Mammary epithelial cell (primary cell): ENCODE measurements at regions of chr19 and their contacts with region 1.

Region 1: DNA sequence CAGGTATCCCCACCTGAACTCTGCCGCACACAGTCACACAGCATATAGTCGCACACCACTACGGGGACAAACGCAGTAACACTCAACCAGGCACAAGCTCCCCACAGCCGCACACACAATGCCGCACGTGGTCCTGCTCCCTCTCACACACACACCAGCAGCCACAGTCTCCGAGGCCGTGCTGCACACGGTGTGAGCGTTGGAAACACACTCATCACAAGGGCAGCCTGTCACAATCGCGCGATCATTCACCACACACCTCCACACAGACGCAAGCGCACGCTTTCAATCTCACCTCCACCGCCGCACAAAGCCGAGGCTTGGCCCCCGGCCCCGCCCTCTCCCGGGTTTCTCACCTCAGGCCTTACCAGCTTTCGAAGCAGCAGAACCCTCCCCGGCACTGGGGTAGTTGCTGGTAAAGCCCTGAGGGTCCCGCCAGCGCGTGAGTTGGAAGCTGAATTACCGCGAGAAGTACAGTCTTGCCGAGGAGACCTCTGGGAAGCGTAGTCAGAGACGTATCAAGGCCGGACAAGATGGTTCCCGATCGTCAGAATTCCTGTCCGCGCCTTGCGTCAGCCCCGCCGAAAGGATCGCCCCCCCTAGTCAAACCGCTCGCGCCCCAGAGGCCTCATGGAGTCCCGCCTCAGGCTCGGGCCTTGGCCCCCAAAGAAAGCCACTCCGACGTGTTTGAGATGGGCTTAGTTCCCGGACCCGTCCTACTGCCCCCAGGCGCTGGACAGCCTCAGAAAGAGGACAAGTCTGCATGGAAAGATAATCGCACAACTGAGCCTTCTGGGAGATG is at the start of gene ZNF566:
- DNase-seq: peak; percentile 96
- H3K4me3 ChIP-seq: peak within 1 kb of the TSS; percentile 61 to 72 (median 68)
- H3K27ac ChIP-seq: peak within 1 kb of the TSS; percentile 87
- H3K4me1 ChIP-seq: no peaks in the 10 kb centered on the region
- H3K27me3 ChIP-seq: no peaks in the 10 kb centered on the region
- CTCF ChIP-seq: no peak
- total RNA-seq, gene ZNF566: 6.0 to 7.2 TPM

Region 2: GRCh38 chr19:36132489-36132891 is 356.8 kb before region 1 on chr19:
- CTCF ChIA-PET with region 1: no interaction called
- dilution Hi-C with region 1: no loop called
- in situ Hi-C with region 1: loop called in 1 of 2 experiments (anchors 10 kb)
- intact Hi-C with region 1: loop called (anchors 5 kb)
- DNase-seq: peak; percentile 99
- H3K4me3 ChIP-seq: no peak overlapping the region
- H3K27ac ChIP-seq: peak overlapping the region; percentile 12
- H3K4me1 ChIP-seq: peaks cover 31% of the 10 kb centered on the region
- H3K27me3 ChIP-seq: no peaks in the 10 kb centered on the region
- CTCF ChIP-seq: no peak

Region 3: GRCh38 chr19:36196249-36196648 is 293.1 kb before region 1 on chr19:
- CTCF ChIA-PET with region 1: no interaction called
- dilution Hi-C with region 1: no loop called
- in situ Hi-C with region 1: no loop called
- intact Hi-C with region 1: loop called (anchors 2 kb)
- DNase-seq: no peak
- H3K4me3 ChIP-seq: no peak overlapping the region
- H3K27ac ChIP-seq: no peak overlapping the region
- H3K4me1 ChIP-seq: no peaks in the 10 kb centered on the region
- H3K27me3 ChIP-seq: no peaks in the 10 kb centered on the region
- CTCF ChIP-seq: no peak

Region 4: DNA sequence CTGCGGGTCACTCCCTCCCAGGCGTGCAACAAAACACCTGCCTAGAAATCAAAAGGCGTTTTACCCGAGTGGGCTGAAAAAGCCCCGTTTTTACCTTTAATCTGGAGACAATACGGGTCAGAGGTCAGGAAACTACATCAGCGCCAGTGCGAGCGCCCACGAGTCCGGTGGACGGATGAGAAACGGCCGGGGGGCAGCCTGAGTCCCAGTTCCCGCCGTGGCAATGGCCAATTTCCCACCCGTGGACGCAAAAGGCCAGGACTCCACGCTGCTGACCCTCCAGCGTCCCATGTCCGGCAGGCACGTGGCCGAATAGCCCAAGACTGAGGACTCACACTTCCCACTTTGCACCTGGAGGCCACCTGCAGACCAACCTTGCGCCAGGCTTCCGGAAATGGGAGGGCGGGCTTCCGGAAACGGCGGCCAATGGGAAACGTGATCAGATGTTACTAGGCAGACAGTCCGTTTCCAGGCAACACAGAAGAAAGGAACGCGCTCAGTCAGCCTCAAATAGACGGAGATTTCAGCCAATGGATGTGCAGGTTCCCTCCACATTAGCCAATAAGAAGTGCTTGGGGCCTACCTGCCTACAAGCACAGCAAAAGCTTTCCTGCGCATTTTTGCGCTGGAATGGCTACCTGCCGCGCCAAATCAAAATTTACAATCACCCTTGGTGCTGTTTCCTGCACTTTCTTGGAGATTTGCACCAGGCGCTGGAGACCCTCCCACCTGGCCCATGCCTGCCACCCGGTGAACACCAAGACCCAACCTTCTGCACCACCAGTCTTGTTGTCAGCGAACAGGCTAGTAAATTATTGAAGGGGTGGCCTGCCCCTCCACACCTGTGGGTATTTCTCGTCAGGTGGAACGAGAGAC is 157.7 kb before region 1 on chr19:
- CTCF ChIA-PET with region 1: no interaction called
- dilution Hi-C with region 1: no loop called
- in situ Hi-C with region 1: no loop called
- intact Hi-C with region 1: loop called (anchors 5 kb)
- DNase-seq: peak; percentile 91
- H3K4me3 ChIP-seq: peak overlapping the region; percentile 57 to 68 (median 63)
- H3K27ac ChIP-seq: no peak overlapping the region
- H3K4me1 ChIP-seq: no peaks in the 10 kb centered on the region
- H3K27me3 ChIP-seq: no peaks in the 10 kb centered on the region
- CTCF ChIP-seq: no peak

Region 5: DNA sequence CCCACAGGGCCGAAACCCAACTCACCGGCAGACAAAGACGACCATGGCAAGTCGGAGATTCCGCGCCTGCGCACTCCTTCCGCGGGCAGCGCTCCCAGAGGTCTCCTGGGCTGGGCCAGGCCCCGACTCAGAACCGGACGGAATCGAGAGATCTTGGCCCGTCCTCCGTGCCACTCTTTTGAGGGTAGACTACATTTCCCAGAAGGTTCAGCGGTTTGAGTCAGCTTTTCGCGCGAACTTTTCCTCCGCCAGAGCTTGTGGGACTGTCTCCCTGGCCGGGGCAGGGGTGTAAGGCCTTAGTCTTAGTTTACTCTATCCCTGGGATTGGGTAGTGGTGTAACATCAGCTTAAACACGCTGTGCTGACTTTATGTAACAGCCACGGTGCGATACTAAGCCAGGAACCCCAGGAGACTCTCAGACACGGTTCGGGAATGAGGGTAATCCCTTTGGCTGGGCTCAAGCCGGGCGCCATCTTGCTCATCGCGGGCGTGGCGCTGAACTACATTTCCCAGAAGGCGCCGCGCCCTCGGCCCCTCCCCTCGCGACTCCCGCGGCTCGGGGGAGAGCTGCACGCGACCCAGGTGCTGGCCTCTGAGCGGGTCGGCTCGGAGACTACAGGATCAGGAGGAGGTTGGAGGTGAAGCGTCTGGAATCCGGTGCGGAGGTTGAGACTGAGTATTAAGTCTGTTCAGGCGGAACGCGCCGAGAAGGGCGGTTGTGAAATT is 39.0 kb after region 1 on chr19 and contains the start of gene ZNF260:
- CTCF ChIA-PET with region 1: no interaction called
- dilution Hi-C with region 1: no loop called
- in situ Hi-C with region 1: no loop called
- intact Hi-C with region 1: loop called (anchors 1 kb)
- DNase-seq: peak; percentile 96
- H3K4me3 ChIP-seq: peak within 1 kb of the TSS; percentile 47 to 99 (median 86)
- H3K27ac ChIP-seq: peak within 1 kb of the TSS; percentile 88
- H3K4me1 ChIP-seq: peaks cover 5% of the 10 kb centered on the region
- H3K27me3 ChIP-seq: no peaks in the 10 kb centered on the region
- CTCF ChIP-seq: peak in 1 of 2 donors; percentile 9
- total RNA-seq, gene ZNF260: 11.8 to 21.0 TPM